Common myeloid progenitor, CD34-positive (primary cell): ENCODE measurements at regions of chr14 and their contacts with region 1.

Region 1: GRCh38 chr14:63437953-63438757 is 105.0 kb downstream of the PPP2R5E start:
- DNase-seq: peak; percentile 38 to 66 (median 64)
- H3K4me3 ChIP-seq: peak overlapping the region in 6 of 7 experiments; percentile 40 to 76 (median 58)
- H3K27ac ChIP-seq: no peak overlapping the region
- H3K4me1 ChIP-seq: peaks cover 0 to 26% (median 12%) of the 10 kb centered on the region in 4 experiments
- H3K27me3 ChIP-seq: no peaks in the 10 kb centered on the region

Region 2: GRCh38 chr14:63448841-63449240 is 10.7 kb after region 1 on chr14:
- CTCF ChIA-PET with region 1: interaction called, 10 read pairs
- POLR2A ChIA-PET with region 1: no interaction called
- DNase-seq: no peak
- H3K4me3 ChIP-seq: no peak overlapping the region
- H3K27ac ChIP-seq: no peak overlapping the region
- H3K4me1 ChIP-seq: no peaks in the 10 kb centered on the region
- H3K27me3 ChIP-seq: no peaks in the 10 kb centered on the region